Endothelial cell of umbilical vein (primary cell): ENCODE measurements at regions of chr3 and their contacts with region 1.

Region 1: GRCh38 chr3:194003125-194004057 is 132.6 kb upstream of the HES1 start:
- DNase-seq: peak; percentile 99
- H3K4me3 ChIP-seq: no peak overlapping the region
- H3K27ac ChIP-seq: peak overlapping the region; percentile 97
- H3K4me1 ChIP-seq: peaks cover 35% of the 10 kb centered on the region
- H3K27me3 ChIP-seq: no peaks in the 10 kb centered on the region
- CTCF ChIP-seq: no peak
- POLR2A ChIP-seq: peak; percentile 22

Region 2: DNA sequence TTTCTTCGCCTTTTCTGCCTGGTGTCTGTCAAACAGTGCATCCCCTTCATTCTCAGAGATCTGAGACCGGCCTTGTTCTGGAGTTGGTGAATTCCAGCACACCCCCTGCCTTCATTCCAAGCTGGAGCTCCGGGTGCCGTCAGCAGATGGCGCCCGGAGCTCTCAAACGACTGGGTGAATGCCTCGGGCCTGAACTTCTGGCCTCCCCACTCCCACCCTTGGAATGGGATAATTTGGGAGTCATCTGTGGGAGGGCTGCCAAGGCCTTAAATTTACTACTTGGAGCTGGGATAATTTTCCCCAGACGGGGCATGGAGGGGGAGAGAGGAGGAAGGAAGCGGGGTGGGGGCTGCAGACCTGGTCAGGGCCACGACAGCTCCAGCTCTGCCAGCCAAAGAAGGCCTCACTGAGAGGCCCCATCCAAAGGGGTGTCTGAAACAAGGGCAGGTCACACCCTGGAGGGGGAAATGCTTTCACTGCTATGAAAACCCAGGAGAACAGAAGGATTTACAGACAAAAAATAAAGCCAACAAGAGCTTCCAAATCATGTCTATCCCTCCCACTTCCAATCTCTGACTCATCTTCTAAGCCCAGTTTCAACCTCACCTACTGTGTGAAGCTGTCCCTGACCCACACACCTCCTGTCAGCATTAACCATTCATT is 222.4 kb before region 1 on chr3:
- CTCF ChIA-PET with region 1: interaction called, 19 read pairs
- POLR2A ChIA-PET with region 1: interaction called, 3 read pairs
- dilution Hi-C with region 1: no loop called
- intact Hi-C with region 1: loop called (anchors 2 kb)
- DNase-seq: peak; percentile 79
- H3K4me3 ChIP-seq: no peak overlapping the region
- H3K27ac ChIP-seq: peak overlapping the region; percentile 65
- H3K4me1 ChIP-seq: peaks cover 18% of the 10 kb centered on the region
- H3K27me3 ChIP-seq: peaks cover 17 to 19% of the 10 kb centered on the region in 2 experiments
- CTCF ChIP-seq: peak; percentile 84 to 88
- POLR2A ChIP-seq: no peak

Region 3: DNA sequence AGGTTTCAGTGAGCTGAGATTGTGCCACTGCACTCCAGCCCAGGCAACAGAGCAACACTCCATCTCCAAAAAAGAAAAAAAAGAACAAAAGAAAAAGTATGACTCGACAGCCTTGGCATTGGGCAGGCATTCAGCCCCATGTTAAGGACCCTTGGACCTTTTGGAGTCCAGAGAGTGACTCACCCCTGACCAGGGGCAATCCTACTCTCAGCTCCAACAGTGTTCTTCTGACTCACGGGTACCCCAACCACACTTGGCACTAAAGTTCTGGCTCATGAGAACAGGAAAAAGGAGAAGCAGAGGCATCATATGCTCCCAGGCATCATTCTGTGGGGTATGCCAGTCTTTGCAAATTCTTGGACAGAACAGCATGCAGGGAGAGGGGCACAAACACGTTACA is 119.8 kb before region 1 on chr3:
- CTCF ChIA-PET with region 1: no interaction called
- POLR2A ChIA-PET with region 1: no interaction called
- dilution Hi-C with region 1: no loop called
- intact Hi-C with region 1: no loop called
- DNase-seq: peak; percentile 16
- H3K4me3 ChIP-seq: no peak overlapping the region
- H3K27ac ChIP-seq: no peak overlapping the region
- H3K4me1 ChIP-seq: no peaks in the 10 kb centered on the region
- H3K27me3 ChIP-seq: no peaks in the 10 kb centered on the region
- CTCF ChIP-seq: no peak
- POLR2A ChIP-seq: no peak

Region 4: DNA sequence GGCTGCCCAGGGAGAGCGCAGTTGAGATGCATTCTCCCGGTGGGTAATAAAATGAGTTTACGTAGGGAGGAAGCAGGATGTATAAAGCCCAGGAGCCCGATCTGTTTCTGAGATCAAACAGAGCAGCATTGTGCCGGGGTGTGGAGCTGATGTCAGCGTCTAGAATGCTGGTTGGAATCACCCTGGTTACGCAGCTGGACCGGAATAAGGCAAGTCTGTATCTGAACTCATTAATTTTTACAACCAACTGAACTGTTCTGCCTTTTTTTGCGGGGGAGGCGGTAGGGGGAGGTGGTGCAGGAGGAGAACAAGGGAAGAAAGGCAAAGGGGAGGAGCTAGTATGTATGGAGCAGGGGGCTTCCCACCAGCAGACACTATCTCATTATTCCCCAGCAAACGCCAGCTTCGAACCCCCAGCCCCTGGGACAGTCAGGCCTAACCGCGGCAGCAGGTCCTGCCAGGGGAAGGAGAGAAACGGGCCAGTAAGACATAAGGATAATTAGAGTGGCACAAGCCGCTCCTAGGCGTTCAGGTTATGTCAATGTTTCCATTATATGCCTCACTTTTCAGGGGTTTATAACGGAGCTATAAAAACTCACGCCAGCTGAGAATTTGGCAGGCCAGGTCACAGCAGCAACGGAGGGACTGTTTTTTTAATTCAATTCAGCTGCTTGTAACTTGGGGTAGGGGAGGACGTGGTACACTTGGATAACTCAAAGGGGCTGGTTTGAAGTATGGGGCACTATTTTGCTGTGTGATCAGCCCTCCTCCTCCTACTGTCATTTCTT is 42.7 kb before region 1 on chr3:
- CTCF ChIA-PET with region 1: no interaction called
- POLR2A ChIA-PET with region 1: no interaction called
- dilution Hi-C with region 1: no loop called
- intact Hi-C with region 1: loop called (anchors 1 kb)
- DNase-seq: peak; percentile 67
- H3K4me3 ChIP-seq: no peak overlapping the region
- H3K27ac ChIP-seq: no peak overlapping the region
- H3K4me1 ChIP-seq: no peaks in the 10 kb centered on the region
- H3K27me3 ChIP-seq: peaks cover 26 to 33% of the 10 kb centered on the region in 2 experiments
- CTCF ChIP-seq: no peak
- POLR2A ChIP-seq: no peak

Region 5: GRCh38 chr3:194043516-194043915 is 40.1 kb after region 1 on chr3:
- CTCF ChIA-PET with region 1: interaction called, 9 read pairs
- POLR2A ChIA-PET with region 1: interaction called, 6 read pairs
- dilution Hi-C with region 1: no loop called
- intact Hi-C with region 1: loop called (anchors 1 kb)
- DNase-seq: peak; percentile 77
- H3K4me3 ChIP-seq: no peak overlapping the region
- H3K27ac ChIP-seq: peak overlapping the region; percentile 56
- H3K4me1 ChIP-seq: peaks cover 35% of the 10 kb centered on the region
- H3K27me3 ChIP-seq: no peaks in the 10 kb centered on the region
- CTCF ChIP-seq: no peak
- POLR2A ChIP-seq: no peak

Region 6: GRCh38 chr3:194134757-194135528 is 131.6 kb after region 1 on chr3:
- CTCF ChIA-PET with region 1: interaction called, 41 read pairs
- POLR2A ChIA-PET with region 1: interaction called, 16 read pairs
- dilution Hi-C with region 1: no loop called
- intact Hi-C with region 1: loop called (anchors 1 kb)
- DNase-seq: peak; percentile 99
- H3K4me3 ChIP-seq: peak overlapping the region in 2 of 3 experiments; percentile 13 to 51
- H3K27ac ChIP-seq: peak overlapping the region; percentile 96
- H3K4me1 ChIP-seq: peaks cover 24% of the 10 kb centered on the region
- H3K27me3 ChIP-seq: no peaks in the 10 kb centered on the region
- CTCF ChIP-seq: no peak
- POLR2A ChIP-seq: peak; percentile 27

Region 7: DNA sequence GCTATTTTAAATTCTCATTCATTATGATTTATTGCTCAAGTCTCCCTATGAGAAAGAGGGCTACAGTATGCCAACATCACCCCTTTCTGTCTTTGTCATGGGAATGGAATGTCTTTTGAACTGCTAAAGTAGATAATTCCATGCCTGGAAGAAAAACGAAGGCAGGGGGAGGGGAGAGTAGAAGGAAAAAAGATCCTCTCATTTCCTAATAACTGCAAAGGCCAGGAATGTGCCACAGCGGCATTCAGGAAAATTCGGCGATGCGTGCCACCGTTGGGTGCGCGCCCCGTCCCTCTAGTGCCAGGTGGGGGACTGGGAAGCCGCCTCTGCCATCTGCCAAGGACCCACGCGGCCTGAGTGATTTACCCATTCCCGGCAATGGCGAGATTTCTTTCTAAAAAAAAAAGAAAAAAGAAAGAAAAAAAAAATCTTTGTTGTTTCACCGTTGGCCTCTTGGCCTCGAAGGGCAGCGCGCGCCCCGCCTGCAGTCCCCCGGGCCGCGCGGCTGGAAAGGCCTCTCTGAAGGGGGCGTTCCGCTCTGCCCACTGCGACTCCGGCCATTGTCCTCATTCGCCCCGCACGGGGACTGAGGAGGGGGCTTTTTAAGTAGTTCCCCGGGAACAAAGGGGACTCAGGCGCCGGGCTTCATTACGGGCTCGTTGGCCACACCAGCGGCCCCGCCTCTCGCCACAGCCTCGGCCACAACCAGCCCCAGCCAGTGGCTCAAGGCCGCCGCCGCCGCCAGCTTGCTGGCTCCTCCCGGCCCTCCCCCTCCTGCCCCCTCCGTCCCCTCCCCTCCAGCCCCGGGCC is 293.3 kb after region 1 on chr3:
- CTCF ChIA-PET with region 1: no interaction called
- POLR2A ChIA-PET with region 1: no interaction called
- dilution Hi-C with region 1: no loop called
- intact Hi-C with region 1: loop called (anchors 1 kb)
- DNase-seq: peak; percentile 82
- H3K4me3 ChIP-seq: peak overlapping the region in 2 of 3 experiments; percentile 2 to 13
- H3K27ac ChIP-seq: peak overlapping the region; percentile 90
- H3K4me1 ChIP-seq: peaks cover 13% of the 10 kb centered on the region
- H3K27me3 ChIP-seq: no peaks in the 10 kb centered on the region
- CTCF ChIP-seq: no peak
- POLR2A ChIP-seq: no peak